A673 (cell line): ENCODE measurements at regions of chr6 and their contacts with region 1.

Region 1: GRCh38 chr6:57316581-57317059 is 810 bp upstream of the PRIM2 start:
- DNase-seq: peak; percentile 96
- H3K4me3 ChIP-seq: peak overlapping the region; percentile 67
- H3K27ac ChIP-seq: peak overlapping the region; percentile 81
- H3K4me1 ChIP-seq: peaks cover 11% of the 10 kb centered on the region
- H3K27me3 ChIP-seq: no peaks in the 10 kb centered on the region
- CTCF ChIP-seq: peak; percentile 89

Region 2: DNA sequence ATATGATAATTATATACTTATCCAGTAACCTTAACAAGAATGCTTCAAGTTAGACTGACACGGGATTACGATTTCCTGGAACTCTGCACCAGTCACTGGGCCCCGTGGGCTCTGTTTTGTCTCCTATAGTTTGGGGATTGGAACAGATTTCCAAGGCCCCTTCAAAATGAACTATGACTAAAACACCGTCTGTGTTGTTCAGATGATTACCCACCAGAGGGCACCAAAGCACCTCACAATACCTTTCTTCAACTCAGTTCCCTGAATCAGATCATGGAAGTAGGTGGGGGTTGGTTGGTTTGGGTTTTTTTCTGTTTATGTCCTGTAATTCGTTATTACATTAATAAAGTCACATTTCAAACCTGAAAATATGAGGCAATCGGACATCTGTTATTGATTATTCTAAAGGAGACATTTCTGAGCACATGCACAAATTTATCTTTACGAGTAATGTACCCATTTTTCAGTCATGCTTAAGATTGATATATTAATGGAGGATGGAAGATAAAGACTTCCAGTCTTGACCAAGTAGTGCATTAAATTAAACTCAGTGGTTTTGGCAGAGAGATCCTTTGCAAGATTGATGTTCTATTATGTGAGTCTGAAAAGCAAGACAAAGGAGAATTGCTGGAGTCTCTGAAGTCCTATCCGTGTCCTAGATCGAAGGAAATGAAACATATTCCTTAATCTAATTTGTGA is 957.3 kb before region 1 on chr6:
- CTCF ChIA-PET with region 1: no interaction called
- POLR2A ChIA-PET with region 1: no interaction called
- intact Hi-C with region 1: loop called (anchors 5 kb)
- DNase-seq: peak; percentile 80
- H3K4me3 ChIP-seq: no peak overlapping the region
- H3K27ac ChIP-seq: no peak overlapping the region
- H3K4me1 ChIP-seq: peaks cover 12% of the 10 kb centered on the region
- H3K27me3 ChIP-seq: no peaks in the 10 kb centered on the region
- CTCF ChIP-seq: peak; percentile 82

Region 3: GRCh38 chr6:56555438-56555872 is 761.2 kb before region 1 on chr6:
- CTCF ChIA-PET with region 1: no interaction called
- POLR2A ChIA-PET with region 1: no interaction called
- intact Hi-C with region 1: no loop called
- DNase-seq: peak; percentile 32
- H3K4me3 ChIP-seq: no peak overlapping the region
- H3K27ac ChIP-seq: no peak overlapping the region
- H3K4me1 ChIP-seq: peaks cover 6% of the 10 kb centered on the region
- H3K27me3 ChIP-seq: no peaks in the 10 kb centered on the region
- CTCF ChIP-seq: no peak

Region 4: DNA sequence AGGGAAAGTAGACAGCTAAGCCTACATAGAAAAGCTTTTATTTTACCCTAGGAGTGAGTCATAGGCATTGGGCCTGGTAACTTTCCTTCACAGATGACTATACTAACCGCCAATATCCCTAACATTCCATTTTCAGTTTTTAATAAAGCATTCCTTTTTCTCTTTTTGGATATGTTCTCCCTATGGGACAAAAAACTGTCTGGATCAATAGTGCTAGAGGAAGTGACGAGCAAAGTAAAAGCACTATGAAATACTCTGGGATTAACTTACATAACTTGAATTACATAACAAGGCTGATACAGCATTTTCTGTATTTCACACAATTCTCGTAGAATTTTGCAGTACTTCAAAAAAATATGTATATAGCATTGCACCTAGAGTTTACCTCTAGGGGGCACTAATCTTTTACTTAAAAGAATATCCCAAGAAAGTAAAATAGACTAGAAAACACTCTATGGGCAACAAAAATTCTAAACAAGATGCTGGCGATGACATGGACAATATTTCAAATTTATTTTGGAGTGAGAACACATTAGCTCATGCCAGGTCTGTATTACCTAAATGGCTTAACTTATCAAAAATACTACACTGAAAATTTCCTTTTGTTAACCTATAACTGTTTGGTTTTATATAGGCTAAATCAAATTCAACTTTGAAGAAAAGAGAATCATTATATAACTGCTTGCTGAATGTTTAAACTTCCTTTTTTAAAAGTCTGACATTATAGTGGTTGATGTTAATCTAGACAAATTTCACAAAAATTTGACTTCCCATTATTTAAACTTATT is 607.6 kb before region 1 on chr6:
- CTCF ChIA-PET with region 1: no interaction called
- POLR2A ChIA-PET with region 1: no interaction called
- intact Hi-C with region 1: loop called (anchors 5 kb)
- DNase-seq: peak; percentile 80
- H3K4me3 ChIP-seq: no peak overlapping the region
- H3K27ac ChIP-seq: no peak overlapping the region
- H3K4me1 ChIP-seq: peaks cover 13% of the 10 kb centered on the region
- H3K27me3 ChIP-seq: no peaks in the 10 kb centered on the region
- CTCF ChIP-seq: peak; percentile 84

Region 5: GRCh38 chr6:56955171-56956045 is 361.2 kb before region 1 on chr6:
- CTCF ChIA-PET with region 1: interaction called, 3 read pairs
- POLR2A ChIA-PET with region 1: no interaction called
- intact Hi-C with region 1: loop called (anchors 5 kb)
- DNase-seq: peak; percentile 92
- H3K4me3 ChIP-seq: peak overlapping the region; percentile 77
- H3K27ac ChIP-seq: peak overlapping the region; percentile 56
- H3K4me1 ChIP-seq: peaks cover 18% of the 10 kb centered on the region
- H3K27me3 ChIP-seq: no peaks in the 10 kb centered on the region
- CTCF ChIP-seq: peak; percentile 85

Region 6: DNA sequence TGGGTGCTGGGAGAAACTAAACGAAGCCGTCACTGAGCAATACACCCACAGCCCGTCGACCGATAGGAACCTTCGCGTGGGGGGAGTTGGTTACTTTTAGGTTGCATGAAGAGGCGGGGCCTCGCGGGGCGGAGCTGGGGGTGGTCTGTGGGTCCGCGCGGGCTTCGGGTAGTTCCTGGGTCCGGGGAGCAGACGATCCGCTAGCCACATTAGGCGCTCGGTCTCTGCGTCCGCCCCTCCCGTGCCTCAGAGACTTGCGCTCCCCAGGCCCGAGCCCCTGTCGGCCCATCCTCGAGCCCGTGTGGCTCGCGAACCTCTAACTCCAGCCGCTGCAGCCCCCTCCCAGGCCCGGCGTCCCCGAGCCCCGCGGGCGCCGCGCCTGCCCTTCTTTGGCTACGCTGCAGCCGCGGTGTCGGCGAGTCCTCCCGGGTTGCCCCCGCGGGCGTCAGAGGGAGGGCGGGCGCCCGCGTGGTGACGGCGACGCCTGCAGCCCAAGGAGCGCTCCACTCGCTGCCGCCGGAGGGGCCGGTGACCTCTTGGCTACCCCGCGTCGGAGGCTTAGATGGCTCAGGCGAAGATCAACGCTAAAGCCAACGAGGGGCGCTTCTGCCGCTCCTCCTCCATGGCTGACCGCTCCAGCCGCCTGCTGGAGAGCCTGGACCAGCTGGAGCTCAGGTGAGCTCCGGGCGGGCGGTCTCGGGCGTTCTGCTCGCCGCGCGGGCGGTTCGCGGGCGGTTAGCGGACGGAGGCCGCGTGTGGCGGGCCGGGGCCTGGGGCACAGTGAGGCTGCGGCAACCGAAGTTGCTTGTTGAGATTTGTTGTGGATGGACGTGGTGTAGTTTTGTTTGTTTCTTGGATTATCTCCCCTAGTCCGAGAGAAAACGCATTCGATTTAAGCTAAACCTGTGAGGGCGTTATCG is 144.2 kb before region 1 on chr6 and contains the start of gene BAG2:
- CTCF ChIA-PET with region 1: no interaction called
- POLR2A ChIA-PET with region 1: no interaction called
- intact Hi-C with region 1: loop called (anchors 5 kb)
- DNase-seq: peak; percentile 96
- H3K4me3 ChIP-seq: peak within 1 kb of the TSS; percentile 83
- H3K27ac ChIP-seq: peak within 1 kb of the TSS; percentile 93
- H3K4me1 ChIP-seq: peaks cover 16% of the 10 kb centered on the region
- H3K27me3 ChIP-seq: no peaks in the 10 kb centered on the region
- CTCF ChIP-seq: no peak
- total RNA-seq, gene BAG2: 21.4 and 27.0 TPM in 2 replicates

Region 7: GRCh38 chr6:57267586-57268293 is 48.9 kb before region 1 on chr6:
- CTCF ChIA-PET with region 1: no interaction called
- POLR2A ChIA-PET with region 1: no interaction called
- intact Hi-C with region 1: loop called (anchors 1 kb)
- DNase-seq: peak; percentile 83
- H3K4me3 ChIP-seq: no peak overlapping the region
- H3K27ac ChIP-seq: no peak overlapping the region
- H3K4me1 ChIP-seq: no peaks in the 10 kb centered on the region
- H3K27me3 ChIP-seq: no peaks in the 10 kb centered on the region
- CTCF ChIP-seq: peak; percentile 74